PC-3 (cell line): ENCODE measurements at regions of chr14 and their contacts with region 1.

Region 1: GRCh38 chr14:75307700-75308379 is 29.2 kb downstream of the FOS start:
- DNase-seq: peak; percentile 93
- ATAC-seq: peak; percentile 86
- H3K4me3 ChIP-seq: no peak overlapping the region
- H3K27ac ChIP-seq: no peak overlapping the region
- H3K4me1 ChIP-seq: no peaks in the 10 kb centered on the region; the same call in 1 of the 2 replicates
- H3K27me3 ChIP-seq: no peaks in the 10 kb centered on the region
- CTCF ChIP-seq: peak; percentile 94

Region 2: DNA sequence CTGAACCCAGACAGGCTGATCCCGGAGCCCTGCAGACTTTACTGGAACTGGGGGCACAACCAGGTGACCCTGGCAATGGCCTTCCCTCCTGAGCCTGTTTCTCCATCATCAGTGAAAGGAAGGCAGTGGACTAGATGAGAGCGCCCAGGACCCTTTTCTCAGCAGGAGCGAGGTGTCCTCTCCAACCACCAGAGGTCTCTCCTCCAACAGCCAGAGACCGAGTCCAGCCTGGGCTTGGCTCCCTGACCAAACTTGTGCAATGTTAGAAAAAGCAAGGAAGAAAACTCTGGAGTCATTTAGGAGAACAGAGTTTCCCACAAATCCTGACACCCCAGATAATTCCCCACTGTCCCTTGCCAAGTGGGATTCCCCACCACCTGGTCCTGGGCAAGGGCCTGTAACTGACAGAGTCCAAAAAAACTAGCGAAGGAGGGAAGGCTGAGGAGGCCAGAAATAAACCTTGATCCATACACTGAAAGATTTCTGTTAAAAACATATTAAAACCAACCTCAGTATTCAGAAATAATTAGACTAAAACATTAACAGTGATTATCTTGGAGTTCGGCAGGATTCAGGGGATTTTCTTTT is 393.8 kb before region 1 on chr14:
- CTCF ChIA-PET with region 1: no interaction called
- POLR2A ChIA-PET with region 1: no interaction called
- intact Hi-C with region 1: loop called (anchors 1 kb)
- DNase-seq: peak; percentile 74
- ATAC-seq: peak; percentile 97
- H3K4me3 ChIP-seq: no peak overlapping the region
- H3K27ac ChIP-seq: no peak overlapping the region
- H3K4me1 ChIP-seq: no peaks in the 10 kb centered on the region
- H3K27me3 ChIP-seq: no peaks in the 10 kb centered on the region
- CTCF ChIP-seq: peak; percentile 91

Region 3: GRCh38 chr14:75132382-75133086 is 175.3 kb before region 1 on chr14:
- CTCF ChIA-PET with region 1: interaction called, 8 read pairs
- POLR2A ChIA-PET with region 1: no interaction called
- intact Hi-C with region 1: loop called (anchors 1 kb)
- DNase-seq: peak; percentile 93
- ATAC-seq: peak; percentile 89
- H3K4me3 ChIP-seq: no peak overlapping the region
- H3K27ac ChIP-seq: no peak overlapping the region
- H3K4me1 ChIP-seq: no peaks in the 10 kb centered on the region
- H3K27me3 ChIP-seq: no peaks in the 10 kb centered on the region
- CTCF ChIP-seq: peak; percentile 86

Region 4: GRCh38 chr14:75165586-75166391 is 142.1 kb before region 1 on chr14:
- CTCF ChIA-PET with region 1: no interaction called
- POLR2A ChIA-PET with region 1: no interaction called
- intact Hi-C with region 1: no loop called
- DNase-seq: no peak
- ATAC-seq: no peak
- H3K4me3 ChIP-seq: no peak overlapping the region
- H3K27ac ChIP-seq: no peak overlapping the region
- H3K4me1 ChIP-seq: peaks cover 10% of the 10 kb centered on the region
- H3K27me3 ChIP-seq: no peaks in the 10 kb centered on the region
- CTCF ChIP-seq: no peak

Region 5: GRCh38 chr14:75487155-75487671 is 179.4 kb after region 1 on chr14:
- CTCF ChIA-PET with region 1: interaction called, 6 read pairs
- POLR2A ChIA-PET with region 1: no interaction called
- intact Hi-C with region 1: loop called (anchors 1 kb)
- DNase-seq: peak; percentile 55
- ATAC-seq: peak; percentile 18; the same call in 1 of the 2 replicates
- H3K4me3 ChIP-seq: no peak overlapping the region
- H3K27ac ChIP-seq: no peak overlapping the region
- H3K4me1 ChIP-seq: peaks cover 3% of the 10 kb centered on the region; the same call in 1 of the 2 replicates
- H3K27me3 ChIP-seq: no peaks in the 10 kb centered on the region
- CTCF ChIP-seq: no peak

Region 6: DNA sequence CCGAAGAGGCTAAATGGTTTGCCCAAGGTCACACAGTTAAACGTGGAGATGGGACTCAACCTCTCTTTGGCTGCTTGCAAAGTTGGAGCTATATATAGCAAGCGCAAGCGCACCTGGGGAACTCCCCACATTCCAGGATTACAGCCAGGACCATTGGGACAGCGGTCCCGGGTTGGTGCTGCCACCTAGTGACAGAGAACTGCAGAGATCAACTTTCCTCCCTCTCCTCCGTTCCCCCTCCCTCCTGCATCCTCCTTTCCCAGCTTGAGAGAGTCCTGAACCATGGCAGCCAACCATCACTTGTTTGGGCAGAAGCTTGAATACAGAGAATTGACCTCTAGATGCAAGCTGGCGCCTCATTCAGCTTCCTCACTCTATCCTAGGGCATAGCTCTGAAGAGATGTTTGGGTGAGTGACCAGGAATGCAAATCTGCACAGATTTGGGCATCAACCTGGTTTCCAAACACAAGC is 253.2 kb after region 1 on chr14:
- CTCF ChIA-PET with region 1: interaction called, 8 read pairs
- POLR2A ChIA-PET with region 1: no interaction called
- intact Hi-C with region 1: loop called (anchors 1 kb)
- DNase-seq: peak; percentile 93
- ATAC-seq: peak; percentile 92
- H3K4me3 ChIP-seq: no peak overlapping the region
- H3K27ac ChIP-seq: no peak overlapping the region
- H3K4me1 ChIP-seq: peaks cover 18% of the 10 kb centered on the region
- H3K27me3 ChIP-seq: no peaks in the 10 kb centered on the region
- CTCF ChIP-seq: peak; percentile 89

Region 7: DNA sequence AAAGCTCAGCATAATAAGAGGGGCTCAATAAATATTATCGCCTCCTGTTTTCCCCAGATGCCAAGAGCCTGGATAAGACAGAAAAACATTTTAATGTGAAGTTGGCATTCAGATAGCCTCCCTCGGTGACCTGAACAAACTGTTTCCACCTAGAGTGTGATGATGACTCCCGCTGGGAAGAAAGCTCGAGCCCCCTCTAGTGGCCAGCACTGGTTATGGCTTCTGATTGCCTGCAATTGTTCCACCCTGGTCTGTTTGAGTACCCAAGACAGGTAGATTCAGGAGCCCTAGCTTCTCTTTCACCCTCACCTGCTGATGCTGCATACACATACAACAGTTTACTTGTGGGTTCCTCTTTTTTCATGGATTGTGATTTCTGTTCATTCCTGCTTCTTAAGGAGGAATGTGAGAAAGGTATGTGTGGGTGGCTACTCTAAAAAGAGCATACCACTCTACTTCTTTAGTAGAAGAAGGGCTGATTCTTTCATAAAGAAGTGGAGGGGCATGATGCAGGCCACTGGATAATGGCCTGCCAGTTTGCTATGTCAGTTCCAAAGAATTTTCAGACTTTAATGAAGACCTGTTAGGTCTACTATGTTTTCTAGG is 346.4 kb after region 1 on chr14:
- CTCF ChIA-PET with region 1: no interaction called
- POLR2A ChIA-PET with region 1: no interaction called
- intact Hi-C with region 1: loop called (anchors 10 kb)
- DNase-seq: peak; percentile 87
- ATAC-seq: peak; percentile 95
- H3K4me3 ChIP-seq: no peak overlapping the region
- H3K27ac ChIP-seq: no peak overlapping the region
- H3K4me1 ChIP-seq: peaks cover 12% of the 10 kb centered on the region
- H3K27me3 ChIP-seq: no peaks in the 10 kb centered on the region
- CTCF ChIP-seq: peak; percentile 96